Common myeloid progenitor, CD34-positive (primary cell): ENCODE measurements at regions of chr3 and their contacts with region 1.

Region 1: DNA sequence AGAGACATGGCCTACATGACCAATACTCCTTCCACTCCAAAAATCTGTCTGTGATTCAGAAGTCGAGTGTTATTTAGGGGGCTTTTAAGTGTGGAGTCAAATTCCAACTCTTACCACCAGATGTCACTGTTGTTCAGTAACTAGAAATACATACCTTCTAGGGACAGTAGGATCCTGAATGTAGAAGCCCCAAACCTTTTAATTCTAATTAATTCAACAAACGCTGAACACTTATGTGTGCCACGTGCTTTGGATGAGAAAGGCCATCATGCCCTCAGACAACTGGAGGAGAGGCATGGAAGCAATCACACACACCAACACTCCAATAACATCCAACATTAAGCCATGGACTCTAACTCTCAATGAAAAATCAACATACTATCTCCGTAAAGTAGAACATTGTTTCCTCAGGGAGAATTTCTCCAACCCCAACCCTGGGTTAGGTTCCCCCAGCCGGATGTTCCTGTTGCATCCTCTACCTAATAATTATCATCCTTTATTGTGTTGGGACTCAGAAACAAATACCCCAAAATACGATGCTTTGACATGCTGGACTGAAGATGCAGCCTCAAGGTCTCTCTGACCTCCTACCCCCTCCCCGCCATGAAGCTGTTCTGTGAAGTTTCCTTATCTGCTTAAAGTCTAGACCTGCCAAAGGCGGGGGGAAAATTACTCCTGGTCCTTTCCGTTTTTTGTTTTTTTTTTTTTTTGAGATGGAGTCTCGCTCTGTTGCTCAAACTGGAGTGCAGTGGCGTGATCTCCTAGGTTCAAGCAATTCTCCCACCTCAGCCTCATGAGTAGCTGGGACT is 8.0 kb upstream of the CCDC13 start:
- DNase-seq: peak; percentile 83 to 93 (median 86)
- H3K4me3 ChIP-seq: no peak overlapping the region
- H3K27ac ChIP-seq: no peak overlapping the region
- H3K4me1 ChIP-seq: no peaks in the 10 kb centered on the region
- H3K27me3 ChIP-seq: no peaks in the 10 kb centered on the region

Region 2: DNA sequence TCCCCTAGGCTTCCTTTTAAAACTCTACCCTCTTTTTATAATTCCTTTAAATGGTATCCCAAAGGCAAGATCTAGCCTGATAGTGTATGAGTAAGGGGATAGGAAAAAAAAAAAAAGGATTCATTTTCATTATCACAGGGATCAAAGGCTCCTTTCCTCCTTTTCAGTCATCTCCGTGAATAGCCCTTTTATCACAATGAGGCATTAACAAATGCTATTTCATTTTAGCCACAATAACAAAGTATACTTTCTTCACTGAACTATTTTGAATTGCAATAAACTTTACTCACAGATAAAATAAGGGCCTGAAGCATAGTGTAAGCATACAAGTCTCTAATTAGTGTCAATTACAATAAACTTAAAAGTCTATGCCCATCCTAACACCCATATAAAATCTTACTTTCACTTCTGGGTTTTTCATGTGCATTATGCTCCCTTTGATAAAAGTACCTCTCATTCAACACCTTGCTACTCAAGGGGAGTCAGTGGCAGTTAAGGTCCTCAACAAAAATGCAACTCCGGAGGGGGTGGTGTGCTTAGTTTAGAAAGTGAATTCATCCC is 14.6 kb after region 1 on chr3:
- CTCF ChIA-PET with region 1: interaction called, 10 read pairs
- POLR2A ChIA-PET with region 1: no interaction called
- DNase-seq: no peak
- H3K4me3 ChIP-seq: no peak overlapping the region
- H3K27ac ChIP-seq: no peak overlapping the region
- H3K4me1 ChIP-seq: peaks cover 0 to 7% (median 6%) of the 10 kb centered on the region in 4 experiments
- H3K27me3 ChIP-seq: no peaks in the 10 kb centered on the region

Region 3: GRCh38 chr3:42831321-42831713 is 50.2 kb after region 1 on chr3:
- CTCF ChIA-PET with region 1: interaction called, 38 read pairs
- POLR2A ChIA-PET with region 1: no interaction called
- DNase-seq: peak; percentile 79 to 88 (median 86)
- H3K4me3 ChIP-seq: peak overlapping the region in 1 of 7 experiments; percentile 1
- H3K27ac ChIP-seq: no peak overlapping the region
- H3K4me1 ChIP-seq: peaks cover 0 to 6% (median 0%) of the 10 kb centered on the region in 4 experiments
- H3K27me3 ChIP-seq: no peaks in the 10 kb centered on the region

Region 4: GRCh38 chr3:42839616-42840015 is 58.5 kb after region 1 on chr3:
- CTCF ChIA-PET with region 1: interaction called, 23 read pairs
- POLR2A ChIA-PET with region 1: interaction called, 3 read pairs
- DNase-seq: peak; percentile 60 to 82 (median 82)
- H3K4me3 ChIP-seq: no peak overlapping the region
- H3K27ac ChIP-seq: no peak overlapping the region
- H3K4me1 ChIP-seq: no peaks in the 10 kb centered on the region
- H3K27me3 ChIP-seq: no peaks in the 10 kb centered on the region

Region 5: GRCh38 chr3:42880601-42881451 is 99.7 kb after region 1 on chr3:
- CTCF ChIA-PET with region 1: interaction called, 26 read pairs
- POLR2A ChIA-PET with region 1: no interaction called
- DNase-seq: peak; percentile 86 to 93 (median 92)
- H3K4me3 ChIP-seq: peak overlapping the region; percentile 41 to 83 (median 62)
- H3K27ac ChIP-seq: no peak overlapping the region
- H3K4me1 ChIP-seq: peaks cover 4 to 20% (median 8%) of the 10 kb centered on the region in 4 experiments
- H3K27me3 ChIP-seq: peaks cover 0 to 12% (median 0%) of the 10 kb centered on the region in 5 experiments